ENCODE measurements at regions of chr5 and their contacts with region 1.

Region 1: DNA sequence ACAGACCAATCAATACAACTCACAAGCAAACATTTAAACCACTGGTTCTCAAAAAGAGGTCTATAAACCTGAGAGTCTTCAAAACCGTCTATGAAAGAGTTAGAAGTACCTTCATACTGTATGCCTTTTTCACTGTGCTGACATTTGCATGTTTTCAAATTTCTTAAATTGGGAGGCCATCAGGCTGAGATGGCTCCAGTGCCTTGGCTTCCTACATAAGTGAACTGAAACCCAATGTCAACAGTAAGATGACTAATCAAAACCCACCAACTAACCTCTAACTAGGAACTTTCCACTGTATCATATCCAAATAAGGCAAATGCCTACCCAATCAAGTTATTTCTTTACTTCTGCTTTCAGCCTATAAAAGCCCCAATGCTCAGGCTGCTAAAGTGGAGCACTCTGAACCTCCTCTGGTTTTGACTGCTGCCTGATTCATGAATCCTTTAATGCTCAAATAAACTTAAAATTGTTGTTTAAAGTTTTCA is 35.1 kb downstream of the FAM13B start:
- DNase-seq: no peak
- H3K4me3 Mint-ChIP-seq: peak overlapping the region; percentile 28
- H3K27ac Mint-ChIP-seq: peak overlapping the region; percentile 92
- H3K4me1 Mint-ChIP-seq: peaks cover 31% of the 10 kb centered on the region
- H3K27me3 Mint-ChIP-seq: no peaks in the 10 kb centered on the region

Region 2: DNA sequence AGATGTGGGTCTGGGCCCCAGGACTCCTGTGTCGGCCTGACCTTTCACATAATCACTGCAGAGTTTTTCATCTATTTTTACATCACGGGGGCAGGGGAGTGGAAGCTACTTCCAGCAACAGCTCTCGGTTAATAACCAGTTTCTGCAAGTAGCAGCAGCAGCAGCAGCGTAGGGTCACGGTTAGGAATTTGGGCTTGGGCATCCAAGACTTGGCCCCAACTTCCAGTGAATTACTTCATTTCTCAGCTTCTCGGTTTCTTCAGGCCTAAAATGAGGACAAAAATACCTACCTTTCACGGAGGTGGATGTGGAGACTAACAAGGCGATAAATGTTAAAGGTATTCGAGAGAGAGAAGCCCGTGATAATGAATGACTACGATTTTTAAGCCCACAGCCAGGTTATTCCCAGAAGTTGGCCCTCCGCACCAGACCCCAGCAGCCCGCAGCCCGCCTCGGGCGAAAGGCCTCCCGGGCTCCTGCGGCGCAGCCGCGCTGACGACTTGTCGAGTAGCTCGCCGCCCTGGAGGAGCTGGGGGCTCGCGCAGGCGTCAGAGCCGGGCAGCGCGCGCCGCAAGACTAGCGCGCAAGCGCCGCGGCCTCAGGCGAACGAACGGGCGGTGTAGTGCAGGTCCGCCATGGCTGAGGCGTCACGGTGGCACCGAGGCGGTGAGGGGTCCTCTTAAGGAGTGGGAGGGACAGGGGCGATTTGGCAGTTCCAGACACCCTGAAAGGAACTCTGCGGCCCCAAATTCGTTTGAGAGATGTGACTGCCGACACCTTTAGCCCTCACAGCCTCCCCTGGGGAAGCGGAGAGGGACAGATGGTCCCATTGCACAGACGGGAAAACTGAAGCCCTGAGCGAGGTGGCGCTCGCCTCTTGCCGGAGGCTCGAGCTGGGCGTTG is 108.7 kb before region 1 on chr5 and contains the start of gene PKD2L2:
- intact Hi-C with region 1: loop called (anchors 5 kb)
- DNase-seq: peak; percentile 94
- H3K4me3 Mint-ChIP-seq: peak within 1 kb of the TSS; percentile 88
- H3K27ac Mint-ChIP-seq: peak within 1 kb of the TSS; percentile 90
- H3K4me1 Mint-ChIP-seq: peaks cover 15% of the 10 kb centered on the region
- H3K27me3 Mint-ChIP-seq: peaks cover 4% of the 10 kb centered on the region
- total RNA-seq, gene PKD2L2: not detected in 2 replicates

Region 3: DNA sequence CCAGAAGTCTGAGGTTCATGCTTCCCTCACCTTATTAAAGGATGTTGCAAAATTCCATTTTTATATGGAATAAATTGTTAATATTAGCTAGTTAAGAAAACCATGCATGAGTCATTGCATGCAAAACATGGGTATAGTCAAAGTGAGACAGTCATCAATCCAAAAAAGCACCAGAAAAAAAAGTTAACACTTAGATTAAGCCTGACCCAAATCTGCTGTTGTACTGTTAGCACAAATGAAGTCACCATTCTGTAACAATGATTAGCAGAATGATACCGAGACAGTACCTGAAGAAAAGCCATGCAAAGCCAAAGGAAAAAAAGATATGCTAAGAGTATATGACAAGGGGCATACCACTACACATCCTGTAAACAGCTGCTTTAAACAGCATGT is 59.0 kb before region 1 on chr5:
- intact Hi-C with region 1: loop called (anchors 2 kb)
- DNase-seq: no peak
- H3K4me3 Mint-ChIP-seq: no peak overlapping the region
- H3K27ac Mint-ChIP-seq: peak overlapping the region; percentile 43
- H3K4me1 Mint-ChIP-seq: peaks cover 4% of the 10 kb centered on the region
- H3K27me3 Mint-ChIP-seq: no peaks in the 10 kb centered on the region

Region 4: DNA sequence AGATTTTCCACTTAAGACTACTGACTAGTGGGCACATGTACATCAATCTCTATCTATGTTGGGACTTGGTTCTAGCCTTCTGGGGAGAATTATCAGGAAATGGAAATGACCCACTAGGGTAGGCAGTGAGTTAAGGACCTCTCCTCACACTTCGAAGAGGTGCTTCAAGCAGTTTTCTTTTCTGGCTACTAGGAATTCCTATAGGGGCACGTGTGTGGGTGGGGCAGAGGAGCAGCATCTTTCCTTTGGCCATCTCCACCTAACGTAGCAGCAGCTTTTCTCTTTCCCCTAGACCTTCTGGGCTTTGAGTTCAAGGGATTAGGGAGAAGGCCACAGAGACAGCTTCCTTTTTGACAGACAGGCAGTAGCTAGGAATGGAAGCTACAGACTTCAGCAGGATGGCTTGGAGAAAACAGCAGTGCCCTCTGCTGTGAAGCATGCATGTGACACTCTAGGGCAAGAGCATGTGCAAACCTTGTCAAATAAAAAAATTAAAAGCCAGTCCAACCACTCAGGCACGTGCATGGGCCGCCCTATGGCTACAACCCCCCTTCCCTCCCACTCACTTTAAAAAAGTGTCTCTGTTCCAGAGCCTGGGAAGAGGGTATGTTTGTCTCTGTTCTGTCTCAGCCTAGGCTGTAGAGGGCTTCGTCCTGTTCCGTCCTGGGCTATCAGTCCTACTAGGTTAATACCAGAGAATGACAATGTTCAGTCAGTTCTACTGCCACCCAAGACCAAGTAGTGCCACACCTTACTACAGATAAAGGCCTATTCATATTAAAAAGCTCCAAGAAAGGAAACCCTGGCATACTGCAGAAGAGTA is 285.4 kb after region 1 on chr5:
- intact Hi-C with region 1: no loop called
- DNase-seq: no peak
- H3K4me3 Mint-ChIP-seq: no peak overlapping the region
- H3K27ac Mint-ChIP-seq: no peak overlapping the region
- H3K4me1 Mint-ChIP-seq: no peaks in the 10 kb centered on the region
- H3K27me3 Mint-ChIP-seq: no peaks in the 10 kb centered on the region

Region 5: GRCh38 chr5:138337685-138338410 is 340.1 kb after region 1 on chr5 and contains the start of gene FAM53C:
- intact Hi-C with region 1: loop called (anchors 5 kb)
- DNase-seq: peak; percentile 98
- H3K4me3 Mint-ChIP-seq: peak within 1 kb of the TSS; percentile 80
- H3K27ac Mint-ChIP-seq: peak within 1 kb of the TSS; percentile 98
- H3K4me1 Mint-ChIP-seq: peaks cover 40% of the 10 kb centered on the region
- H3K27me3 Mint-ChIP-seq: no peaks in the 10 kb centered on the region
- total RNA-seq, gene FAM53C: 24.1 and 27.1 TPM in 2 replicates